Activated CD8-positive, alpha-beta memory T cell treated with anti-CD3 and anti-CD28 coated beads, Interleukin-2, amount 10 ng/mL, durations not matched to agents 7 days and 5 days (primary cell): ENCODE measurements at regions of chr7 and their contacts with region 1.

Region 1: DNA sequence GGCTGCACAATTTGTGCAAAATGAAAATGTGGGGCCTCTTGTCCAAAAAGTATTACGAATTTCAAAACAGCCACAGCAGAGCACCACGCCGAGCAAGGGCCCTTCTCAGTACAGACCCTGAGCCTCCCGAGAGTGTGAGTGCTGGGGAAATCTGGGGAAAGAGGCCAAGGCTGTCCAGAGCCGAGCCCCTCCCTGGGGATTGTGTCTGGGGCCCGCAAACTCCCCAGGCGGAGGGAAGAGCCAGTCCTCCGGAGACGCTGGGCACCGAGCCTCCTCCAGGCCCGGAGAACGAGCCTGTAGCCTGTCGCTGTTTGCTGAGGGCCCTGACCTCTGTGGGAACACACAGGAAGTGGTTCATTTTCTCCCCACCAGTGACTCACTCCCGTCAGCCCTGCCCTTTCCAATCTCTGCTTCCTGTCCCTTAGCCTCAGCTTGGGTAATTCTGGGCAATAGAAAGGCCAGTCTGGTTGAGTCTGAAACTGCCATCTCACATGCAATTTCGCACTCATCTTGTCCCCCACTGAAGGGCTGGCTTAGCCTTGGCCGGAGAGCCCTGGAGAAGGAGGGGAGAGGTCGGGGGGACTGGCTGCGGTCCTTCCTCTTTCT is 19.5 kb upstream of the GNA12 start:
- DNase-seq: peak; percentile 94
- ATAC-seq: peak; percentile 94
- H3K4me3 Mint-ChIP-seq: peak overlapping the region; percentile 54
- H3K27ac Mint-ChIP-seq: peak overlapping the region; percentile 85
- H3K4me1 Mint-ChIP-seq: peaks cover 27% of the 10 kb centered on the region
- H3K27me3 Mint-ChIP-seq: peaks cover 13% of the 10 kb centered on the region

Region 2: GRCh38 chr7:2873686-2874551 is 10.4 kb after region 1 on chr7:
- CTCF ChIA-PET with region 1: interaction called, 12 read pairs
- DNase-seq: no peak
- ATAC-seq: peak; percentile 59
- H3K4me3 Mint-ChIP-seq: no peak overlapping the region
- H3K27ac Mint-ChIP-seq: peak overlapping the region; percentile 50
- H3K4me1 Mint-ChIP-seq: peaks cover 44% of the 10 kb centered on the region
- H3K27me3 Mint-ChIP-seq: peaks cover 10% of the 10 kb centered on the region

Region 3: DNA sequence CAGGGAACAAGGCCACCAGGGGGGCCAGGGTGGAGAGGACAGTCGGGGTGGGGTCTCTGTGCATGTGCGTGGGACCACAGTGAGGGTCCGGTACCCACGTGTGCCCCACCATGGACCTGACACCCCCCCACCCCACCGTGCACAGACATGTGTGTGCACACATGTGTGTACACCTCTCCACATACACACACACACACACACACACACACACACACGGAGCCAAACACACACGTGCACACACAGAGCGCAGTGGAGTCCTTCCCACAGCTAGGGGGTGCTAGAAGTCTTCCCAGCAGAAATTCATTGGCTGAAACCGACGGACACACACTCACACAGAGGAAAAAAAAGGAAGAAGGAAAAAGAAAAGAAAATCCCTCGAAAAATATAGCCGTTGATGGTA is 23.3 kb after region 1 on chr7:
- CTCF ChIA-PET with region 1: interaction called, 15 read pairs
- DNase-seq: peak; percentile 73
- ATAC-seq: peak; percentile 74
- H3K4me3 Mint-ChIP-seq: no peak overlapping the region
- H3K27ac Mint-ChIP-seq: peak overlapping the region; percentile 2
- H3K4me1 Mint-ChIP-seq: peaks cover 4% of the 10 kb centered on the region
- H3K27me3 Mint-ChIP-seq: peaks cover 7% of the 10 kb centered on the region

Region 4: DNA sequence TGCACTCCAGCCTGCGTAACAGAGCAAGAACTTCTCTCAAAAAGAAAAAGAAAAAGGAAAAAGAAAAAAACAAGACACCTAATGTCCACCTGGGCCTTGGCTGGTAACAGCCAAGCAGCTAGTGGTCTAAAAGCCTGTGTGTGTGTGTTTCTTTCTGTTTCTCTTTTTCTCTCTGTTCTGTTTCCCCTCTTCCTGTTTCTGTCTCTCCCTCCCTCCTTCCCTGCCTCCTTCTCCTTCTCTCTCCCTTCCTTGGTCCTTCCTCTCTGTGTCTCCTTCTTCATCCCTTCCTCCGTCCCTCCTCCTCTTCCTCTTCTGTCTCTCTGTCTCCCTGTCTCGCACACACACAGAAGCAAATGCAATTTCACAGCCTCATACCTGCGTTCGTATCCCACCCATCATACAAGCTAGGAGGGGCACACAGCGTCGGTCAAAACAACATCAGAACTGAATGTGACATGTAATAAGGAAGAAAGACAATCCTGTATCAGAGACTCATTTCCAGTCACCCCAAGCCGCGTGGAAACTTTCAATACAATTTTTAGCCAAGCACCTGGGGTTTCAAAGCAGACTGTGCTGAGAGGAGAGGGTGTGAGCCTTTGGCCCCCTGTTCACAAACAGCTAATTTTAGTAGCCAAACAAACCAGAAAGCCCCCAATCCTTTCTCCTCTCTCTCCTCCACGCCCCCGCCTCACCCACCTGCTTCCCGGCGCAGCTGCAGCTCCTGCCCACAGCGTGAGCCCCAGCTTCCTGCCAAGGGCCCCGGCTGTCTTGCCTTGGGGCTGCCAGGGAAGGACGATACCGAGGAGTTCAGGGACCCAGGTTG is 30.8 kb after region 1 on chr7:
- CTCF ChIA-PET with region 1: interaction called, 25 read pairs
- DNase-seq: peak; percentile 83
- ATAC-seq: peak; percentile 78
- H3K4me3 Mint-ChIP-seq: peak overlapping the region; percentile 86
- H3K27ac Mint-ChIP-seq: peak overlapping the region; percentile 94
- H3K4me1 Mint-ChIP-seq: peaks cover 22% of the 10 kb centered on the region
- H3K27me3 Mint-ChIP-seq: no peaks in the 10 kb centered on the region

Region 5: GRCh38 chr7:3154912-3155494 is 291.4 kb after region 1 on chr7:
- CTCF ChIA-PET with region 1: interaction called, 24 read pairs
- DNase-seq: peak; percentile 79
- ATAC-seq: peak; percentile 83
- H3K4me3 Mint-ChIP-seq: no peak overlapping the region
- H3K27ac Mint-ChIP-seq: peak overlapping the region; percentile 22
- H3K4me1 Mint-ChIP-seq: peaks cover 31% of the 10 kb centered on the region
- H3K27me3 Mint-ChIP-seq: peaks cover 7% of the 10 kb centered on the region

Region 6: DNA sequence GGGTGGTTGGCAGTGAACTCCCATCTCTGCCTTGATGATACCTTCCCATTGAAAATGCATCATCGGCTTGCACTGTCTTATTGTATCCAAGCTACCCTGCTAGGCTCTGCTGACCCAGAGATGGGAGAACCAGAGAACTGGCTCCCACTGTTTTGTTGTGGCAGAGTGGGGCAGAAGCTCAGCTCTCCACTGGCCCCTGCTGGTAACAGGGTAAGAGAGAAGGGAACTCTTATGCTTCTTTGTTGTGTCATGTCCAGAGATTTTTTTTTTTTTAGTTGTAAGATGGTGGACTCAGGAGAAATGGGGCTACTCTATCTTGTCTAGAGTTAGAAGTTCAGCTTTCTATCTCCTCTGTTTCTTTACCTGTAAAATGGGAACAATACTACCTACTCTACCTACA is 336.9 kb after region 1 on chr7:
- CTCF ChIA-PET with region 1: interaction called, 20 read pairs
- DNase-seq: peak; percentile 59
- ATAC-seq: peak; percentile 68
- H3K4me3 Mint-ChIP-seq: no peak overlapping the region
- H3K27ac Mint-ChIP-seq: no peak overlapping the region
- H3K4me1 Mint-ChIP-seq: no peaks in the 10 kb centered on the region
- H3K27me3 Mint-ChIP-seq: peaks cover 17% of the 10 kb centered on the region

Region 7: GRCh38 chr7:3897438-3898385 is 1034.1 kb after region 1 on chr7:
- CTCF ChIA-PET with region 1: interaction called, 12 read pairs
- DNase-seq: peak; percentile 49
- ATAC-seq: no peak
- H3K4me3 Mint-ChIP-seq: no peak overlapping the region
- H3K27ac Mint-ChIP-seq: no peak overlapping the region
- H3K4me1 Mint-ChIP-seq: no peaks in the 10 kb centered on the region
- H3K27me3 Mint-ChIP-seq: peaks cover 9% of the 10 kb centered on the region